GM12878 (cell line): ENCODE measurements at regions of chr19 and their contacts with region 1.

Region 1: DNA sequence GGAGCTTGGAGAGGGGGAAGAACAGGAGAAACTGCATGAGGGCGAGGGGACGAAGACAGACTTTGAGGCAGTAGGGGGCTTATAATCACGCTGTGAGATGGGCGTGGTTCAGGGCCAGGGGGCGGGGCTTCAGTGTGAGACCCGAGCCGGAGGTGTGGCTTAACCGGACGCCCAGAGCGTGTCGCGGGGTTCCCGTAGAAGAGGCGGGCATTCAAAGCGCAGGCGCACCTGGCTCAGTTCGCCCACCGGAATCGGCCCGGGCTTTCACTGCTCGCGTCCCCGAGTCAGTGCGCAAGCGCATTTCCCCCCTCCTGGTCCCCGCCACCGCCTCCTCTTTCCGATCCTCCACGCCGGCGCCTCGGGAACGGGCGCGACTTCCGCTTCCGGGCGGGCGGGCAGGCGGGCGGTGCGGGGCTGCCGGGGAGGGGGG is 225 bp upstream of the ZNF865 start:
- DNase-seq: peak; percentile 94
- ATAC-seq: peak; percentile 86
- H3K4me3 ChIP-seq: peak overlapping the region; percentile 69; the same call in 1 of the 2 replicates
- H3K27ac ChIP-seq: peak overlapping the region; percentile 90
- H3K4me1 ChIP-seq: peaks cover 10% of the 10 kb centered on the region; the same call in 1 of the 2 replicates
- H3K27me3 ChIP-seq: no peaks in the 10 kb centered on the region
- CTCF ChIP-seq: no peak
- EP300 ChIP-seq: no peak
- POLR2A ChIP-seq: no peak
- RAD21 ChIP-seq: no peak

Region 2: GRCh38 chr19:55516878-55517620 is 88.2 kb before region 1 on chr19:
- CTCF ChIA-PET with region 1: interaction called, 42 read pairs
- POLR2A ChIA-PET with region 1: interaction called, 7 read pairs
- RAD21 ChIA-PET with region 1: interaction called, 5 read pairs
- SMC1A ChIA-PET with region 1: interaction called, 6 read pairs
- in situ Hi-C with region 1: no loop called
- intact Hi-C with region 1: loop called (anchors 1 kb)
- DNase-seq: peak; percentile 66
- ATAC-seq: peak; percentile 100
- H3K4me3 ChIP-seq: peak overlapping the region; percentile 66; the same call in 1 of the 2 replicates
- H3K27ac ChIP-seq: peak overlapping the region; percentile 62
- H3K4me1 ChIP-seq: 0 out of 2 replicates have a peak, but pooled peaks cover 4% of the 10 kb centered on the region
- H3K27me3 ChIP-seq: no peaks in the 10 kb centered on the region
- CTCF ChIP-seq: peak; percentile 80 to 97 (median 96); a peak in 5 of 6 replicates
- EP300 ChIP-seq: peak in 1 of 2 experiments; percentile 16; a peak in 1 of 4 replicates
- POLR2A ChIP-seq: peak; percentile 53; the same call in 1 of the 2 replicates
- RAD21 ChIP-seq: peak; percentile 96

Region 3: GRCh38 chr19:55619286-55619685 is 14.1 kb after region 1 on chr19:
- CTCF ChIA-PET with region 1: interaction called, 76 read pairs
- POLR2A ChIA-PET with region 1: interaction called, 21 read pairs
- RAD21 ChIA-PET with region 1: interaction called, 29 read pairs
- SMC1A ChIA-PET with region 1: interaction called, 8 read pairs
- in situ Hi-C with region 1: no loop called
- intact Hi-C with region 1: no loop called
- DNase-seq: no peak
- ATAC-seq: no peak
- H3K4me3 ChIP-seq: no peak overlapping the region
- H3K27ac ChIP-seq: no peak overlapping the region
- H3K4me1 ChIP-seq: no peaks in the 10 kb centered on the region
- H3K27me3 ChIP-seq: no peaks in the 10 kb centered on the region
- CTCF ChIP-seq: no peak
- EP300 ChIP-seq: no peak
- POLR2A ChIP-seq: no peak
- RAD21 ChIP-seq: no peak

Region 4: DNA sequence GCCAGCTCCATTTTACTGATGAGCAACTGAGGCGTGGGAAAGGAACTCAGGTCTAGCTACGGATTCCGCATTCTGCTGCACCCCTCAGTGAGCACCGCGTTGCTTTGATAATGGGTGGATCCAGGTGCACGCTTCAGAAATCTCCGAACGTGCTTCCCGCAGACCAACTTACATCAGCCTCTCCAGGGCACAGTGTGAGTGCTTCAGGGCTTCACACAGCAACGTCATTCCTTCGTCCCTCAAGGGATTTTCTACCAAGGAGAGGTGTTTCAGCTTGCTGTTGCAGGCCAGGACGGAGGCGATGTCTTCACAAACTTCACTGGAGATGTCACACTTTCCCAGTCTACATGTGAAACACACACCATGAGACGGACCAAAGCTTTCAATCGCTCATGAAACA is 111.3 kb after region 1 on chr19:
- CTCF ChIA-PET with region 1: no interaction called
- POLR2A ChIA-PET with region 1: no interaction called
- RAD21 ChIA-PET with region 1: no interaction called
- SMC1A ChIA-PET with region 1: no interaction called
- in situ Hi-C with region 1: no loop called
- intact Hi-C with region 1: no loop called
- DNase-seq: no peak
- ATAC-seq: no peak
- H3K4me3 ChIP-seq: no peak overlapping the region
- H3K27ac ChIP-seq: no peak overlapping the region
- H3K4me1 ChIP-seq: no peaks in the 10 kb centered on the region
- H3K27me3 ChIP-seq: no peaks in the 10 kb centered on the region
- CTCF ChIP-seq: no peak
- EP300 ChIP-seq: no peak
- POLR2A ChIP-seq: no peak
- RAD21 ChIP-seq: no peak